ENCODE measurements at regions of chr7 and their contacts with region 1.

Region 1: DNA sequence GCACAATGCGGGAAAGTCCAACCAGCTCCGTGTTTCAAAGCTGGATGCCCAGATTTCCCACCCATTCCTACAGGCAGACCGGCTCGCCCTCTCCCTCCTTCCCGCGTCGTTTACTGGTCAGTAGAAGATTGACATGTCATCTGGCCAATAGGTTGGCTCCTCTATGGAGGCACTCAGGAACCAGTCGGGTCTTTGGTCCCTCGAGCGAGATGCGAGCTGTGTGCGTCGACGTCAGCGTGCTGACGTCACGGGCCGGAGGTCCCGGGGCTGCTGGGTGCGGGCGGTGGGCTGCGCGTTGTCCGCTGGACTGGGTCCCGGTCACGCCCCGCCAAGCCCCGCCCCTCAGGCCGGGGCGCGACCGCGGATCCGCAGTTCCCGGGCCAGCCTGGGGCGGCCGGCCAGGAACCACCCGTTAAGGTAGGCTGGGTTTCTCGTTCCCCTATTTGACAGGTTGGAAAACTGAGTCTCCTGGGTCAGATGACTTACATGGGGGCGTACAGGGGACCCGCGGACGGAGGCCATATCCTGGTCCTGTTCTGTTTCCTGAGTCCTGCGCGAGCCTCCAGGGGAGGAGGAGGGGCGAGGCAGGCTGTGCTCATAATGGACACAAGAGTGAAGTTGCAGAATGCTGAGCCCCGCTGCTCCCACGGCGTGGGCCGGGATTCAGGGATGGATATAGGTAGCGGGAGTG is at the start of gene STARD3NL:
- DNase-seq: peak; percentile 68 to 97 (median 88)
- ATAC-seq: peak; percentile 97
- H3K4me3 ChIP-seq: peak within 1 kb of the TSS; percentile 96
- H3K4me3 Mint-ChIP-seq: peak within 1 kb of the TSS; percentile 94 to 100 (median 99)
- H3K27ac ChIP-seq: peak within 1 kb of the TSS; percentile 84
- H3K27ac Mint-ChIP-seq: peak within 1 kb of the TSS; percentile 66 to 98 (median 97)
- H3K4me1 ChIP-seq: peaks cover 17 to 23% of the 10 kb centered on the region in 2 donors
- H3K4me1 Mint-ChIP-seq: peaks cover 21 to 50% (median 45%) of the 10 kb centered on the region in 7 donors
- H3K27me3 ChIP-seq: no peaks in the 10 kb centered on the region
- H3K27me3 Mint-ChIP-seq: peaks cover 3 to 14% (median 10%) of the 10 kb centered on the region in 5 donors
- total RNA-seq, gene STARD3NL: 9.4 to 22.0 (median 12.2) TPM

Region 2: DNA sequence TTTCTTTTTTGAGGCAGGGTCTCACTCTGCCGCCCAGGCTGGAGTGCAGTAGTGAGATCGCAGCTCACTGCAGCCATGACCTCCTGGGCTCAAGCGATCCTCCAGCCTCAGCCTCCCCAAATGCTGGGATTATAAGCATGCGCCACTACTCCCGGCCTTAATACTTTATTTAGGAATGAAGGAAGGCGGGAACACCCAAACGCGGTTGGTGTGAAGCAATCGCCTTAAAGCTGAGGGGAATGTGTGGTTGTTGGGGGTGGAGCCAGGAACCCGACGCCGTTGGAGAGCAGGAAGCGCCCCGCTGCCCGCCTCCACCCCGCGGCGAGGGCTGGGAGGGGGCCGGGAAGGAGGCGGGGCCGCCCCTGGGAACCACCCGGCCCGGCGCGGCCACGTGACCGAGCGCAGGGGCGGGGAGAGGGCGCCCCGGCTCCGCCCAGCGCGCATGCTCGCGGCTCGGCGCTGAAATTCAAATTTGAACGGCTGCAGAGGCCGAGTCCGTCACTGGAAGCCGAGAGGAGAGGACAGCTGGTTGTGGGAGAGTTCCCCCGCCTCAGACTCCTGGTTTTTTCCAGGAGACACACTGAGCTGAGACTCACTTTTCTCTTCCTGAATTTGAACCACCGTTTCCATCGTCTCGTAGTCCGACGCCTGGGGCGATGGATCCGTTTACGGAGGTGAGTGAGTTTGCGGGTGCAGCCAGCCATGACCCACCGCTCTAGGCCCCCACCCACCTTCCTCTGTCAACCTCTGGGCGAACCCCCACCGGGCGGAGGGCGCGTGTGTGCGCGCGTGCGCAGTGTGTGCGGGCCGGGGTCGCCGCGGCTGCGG is 1788.6 kb before region 1 on chr7 and contains the start of gene ANLN:
- CTCF ChIA-PET with region 1: no interaction called
- POLR2A ChIA-PET with region 1: no interaction called
- intact Hi-C with region 1: loop called in 1 of 2 experiments (anchors 2 kb)
- DNase-seq: peak; percentile 71 to 91 (median 82)
- ATAC-seq: peak; percentile 98
- H3K4me3 ChIP-seq: peak within 1 kb of the TSS; percentile 78
- H3K4me3 Mint-ChIP-seq: peak within 1 kb of the TSS; percentile 77 to 90 (median 85)
- H3K27ac ChIP-seq: peak within 1 kb of the TSS; percentile 67
- H3K27ac Mint-ChIP-seq: peak within 1 kb of the TSS; percentile 72 to 90 (median 81)
- H3K4me1 ChIP-seq: peaks cover 8 to 19% of the 10 kb centered on the region in 2 donors
- H3K4me1 Mint-ChIP-seq: peaks cover 12 to 39% (median 26%) of the 10 kb centered on the region in 7 donors
- H3K27me3 ChIP-seq: no peaks in the 10 kb centered on the region
- H3K27me3 Mint-ChIP-seq: peaks cover 0 to 12% (median 0%) of the 10 kb centered on the region in 5 donors
- total RNA-seq, gene ANLN: 0.35 to 48.6 (median 0.82) TPM

Region 3: GRCh38 chr7:37770838-37771237 is 407.3 kb before region 1 on chr7:
- CTCF ChIA-PET with region 1: no interaction called
- POLR2A ChIA-PET with region 1: no interaction called
- intact Hi-C with region 1: no loop called
- DNase-seq: no peak
- ATAC-seq: no peak
- H3K4me3 ChIP-seq: no peak overlapping the region
- H3K4me3 Mint-ChIP-seq: no peak overlapping the region
- H3K27ac ChIP-seq: no peak overlapping the region
- H3K27ac Mint-ChIP-seq: no peak overlapping the region
- H3K4me1 ChIP-seq: no peaks in the 10 kb centered on the region
- H3K4me1 Mint-ChIP-seq: peaks cover 0 to 8% (median 0%) of the 10 kb centered on the region in 7 donors
- H3K27me3 ChIP-seq: no peaks in the 10 kb centered on the region
- H3K27me3 Mint-ChIP-seq: peaks cover 0 to 19% (median 7%) of the 10 kb centered on the region in 5 donors

Region 4: DNA sequence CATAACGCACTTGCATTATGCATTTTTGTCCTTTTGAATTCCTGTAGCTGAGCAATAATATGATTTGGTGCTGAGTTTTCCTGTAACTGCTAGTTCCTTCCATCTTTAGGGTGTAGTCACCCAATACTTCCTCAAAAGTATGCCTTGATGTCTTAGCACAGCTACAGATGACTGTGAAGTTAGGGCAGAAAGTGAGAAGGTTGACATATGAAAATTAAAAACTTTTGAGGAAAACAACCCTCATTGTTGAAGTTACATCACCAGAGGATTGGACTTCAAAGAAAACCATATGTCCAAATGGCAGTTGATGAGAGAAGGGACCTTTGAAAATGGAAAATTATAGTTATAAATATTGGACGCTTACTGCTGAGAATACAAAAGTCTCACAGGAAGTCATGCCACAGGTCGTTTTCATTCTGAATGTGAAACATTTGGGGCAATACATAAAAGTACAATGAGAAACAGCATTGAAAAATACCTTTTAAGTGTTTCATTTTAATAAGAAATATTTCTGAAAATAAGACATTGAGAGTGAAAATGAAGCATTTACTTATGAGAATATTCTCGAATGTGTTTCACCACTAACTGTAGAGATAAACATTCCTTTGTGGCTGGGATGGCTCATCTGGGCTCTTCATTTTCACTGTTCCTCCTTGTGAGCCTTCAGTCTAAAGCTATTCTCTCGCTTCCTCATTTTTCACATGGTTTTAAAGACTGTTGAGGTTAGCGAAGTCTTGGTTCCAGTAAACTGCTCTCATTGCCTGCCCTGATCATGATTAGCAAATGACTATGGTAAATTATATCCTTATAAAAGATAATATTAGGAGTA is 391.2 kb before region 1 on chr7:
- CTCF ChIA-PET with region 1: no interaction called
- POLR2A ChIA-PET with region 1: no interaction called
- intact Hi-C with region 1: no loop called
- DNase-seq: peak in 5 of 9 donors; percentile 4 to 48 (median 19)
- ATAC-seq: peak; percentile 76
- H3K4me3 ChIP-seq: no peak overlapping the region
- H3K4me3 Mint-ChIP-seq: peak overlapping the region in 2 of 10 donors; percentile 1 to 34
- H3K27ac ChIP-seq: no peak overlapping the region
- H3K27ac Mint-ChIP-seq: peak overlapping the region in 4 of 9 donors; percentile 21 to 78 (median 40)
- H3K4me1 ChIP-seq: no peaks in the 10 kb centered on the region
- H3K4me1 Mint-ChIP-seq: peaks cover 0 to 9% (median 5%) of the 10 kb centered on the region in 7 donors
- H3K27me3 ChIP-seq: no peaks in the 10 kb centered on the region
- H3K27me3 Mint-ChIP-seq: peaks cover 6 to 16% (median 7%) of the 10 kb centered on the region in 5 donors

Region 5: DNA sequence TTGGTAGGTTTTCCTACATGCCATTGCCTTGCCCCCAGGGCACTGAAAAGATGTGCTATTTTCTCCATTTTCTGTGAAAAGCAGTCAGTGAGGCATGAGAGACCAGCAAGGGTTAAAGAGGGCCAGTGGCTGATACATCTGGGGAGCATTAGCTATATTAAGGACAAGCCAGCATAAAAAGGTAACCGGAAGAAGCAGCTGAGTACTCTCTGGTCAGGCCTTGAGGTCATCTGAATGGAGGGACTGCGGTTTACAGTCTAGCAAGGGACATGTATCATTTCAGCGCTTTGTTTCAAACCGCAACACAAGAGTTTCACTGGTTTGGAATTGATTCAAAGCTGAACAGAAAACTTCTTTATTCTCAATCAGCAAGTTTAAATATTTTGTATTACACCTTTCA is 137.3 kb before region 1 on chr7:
- CTCF ChIA-PET with region 1: no interaction called
- POLR2A ChIA-PET with region 1: no interaction called
- intact Hi-C with region 1: no loop called
- DNase-seq: no peak
- ATAC-seq: no peak
- H3K4me3 ChIP-seq: no peak overlapping the region
- H3K4me3 Mint-ChIP-seq: no peak overlapping the region
- H3K27ac ChIP-seq: no peak overlapping the region
- H3K27ac Mint-ChIP-seq: no peak overlapping the region
- H3K4me1 ChIP-seq: no peaks in the 10 kb centered on the region
- H3K4me1 Mint-ChIP-seq: no peaks in the 10 kb centered on the region
- H3K27me3 ChIP-seq: no peaks in the 10 kb centered on the region
- H3K27me3 Mint-ChIP-seq: peaks cover 0 to 17% (median 8%) of the 10 kb centered on the region in 5 donors

Region 6: DNA sequence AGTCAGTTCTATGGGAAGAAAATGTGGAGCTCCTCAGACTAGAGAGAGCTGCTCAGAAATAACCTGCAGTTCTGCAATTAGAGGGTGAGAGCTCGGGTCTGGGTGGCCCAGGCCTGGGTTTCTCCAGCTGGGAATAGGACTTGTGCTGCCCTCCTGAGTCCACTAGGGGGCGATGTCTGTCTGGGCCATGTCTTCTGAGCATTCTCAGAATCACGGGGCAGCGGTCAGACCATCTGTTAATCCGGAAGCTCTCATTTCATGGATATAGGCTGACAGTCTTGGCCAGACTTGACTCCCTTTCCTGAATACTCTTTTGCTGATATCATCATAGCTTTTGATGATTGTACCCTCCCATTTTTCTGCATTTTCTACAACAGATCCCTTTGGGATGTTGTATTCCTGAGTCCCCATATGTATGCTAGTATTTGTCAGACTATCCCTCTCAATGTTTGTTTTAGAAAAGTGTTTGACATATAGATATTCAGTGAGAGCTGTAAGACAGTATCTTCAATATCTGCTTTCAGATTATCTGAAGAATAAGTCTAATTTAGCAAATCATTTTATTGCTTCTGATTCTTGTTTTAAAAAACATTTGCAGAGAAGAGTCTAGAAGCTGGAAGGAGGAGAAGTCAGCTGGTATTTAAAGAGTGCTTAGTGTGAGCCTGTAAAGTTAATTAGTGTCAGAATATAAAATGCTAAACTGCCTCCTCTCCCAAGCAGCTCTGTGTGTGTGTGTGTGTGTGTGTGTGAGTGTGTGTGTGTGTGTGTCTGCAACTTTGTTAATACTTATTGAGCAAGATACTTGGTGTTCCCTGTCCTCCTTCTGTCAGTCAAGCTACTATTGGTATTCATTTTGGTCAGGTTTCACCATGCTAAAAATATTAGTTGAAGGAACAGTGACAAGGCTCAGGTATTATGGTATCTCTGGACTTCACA is 37.9 kb after region 1 on chr7:
- CTCF ChIA-PET with region 1: interaction called, 16 read pairs
- POLR2A ChIA-PET with region 1: interaction called, 4 read pairs
- intact Hi-C with region 1: loop called (anchors 1 kb)
- DNase-seq: peak; percentile 50 to 73 (median 65)
- ATAC-seq: peak; percentile 95
- H3K4me3 ChIP-seq: no peak overlapping the region
- H3K4me3 Mint-ChIP-seq: peak overlapping the region in 5 of 10 donors; percentile 1 to 45 (median 27)
- H3K27ac ChIP-seq: peak overlapping the region; percentile 27
- H3K27ac Mint-ChIP-seq: peak overlapping the region in 7 of 9 donors; percentile 5 to 72 (median 47)
- H3K4me1 ChIP-seq: peaks cover 8 to 57% of the 10 kb centered on the region in 2 donors
- H3K4me1 Mint-ChIP-seq: peaks cover 7 to 34% (median 10%) of the 10 kb centered on the region in 7 donors
- H3K27me3 ChIP-seq: no peaks in the 10 kb centered on the region
- H3K27me3 Mint-ChIP-seq: no peaks in the 10 kb centered on the region

Region 7: GRCh38 chr7:38318803-38319416 is 140.8 kb after region 1 on chr7:
- CTCF ChIA-PET with region 1: no interaction called
- POLR2A ChIA-PET with region 1: no interaction called
- intact Hi-C with region 1: no loop called
- DNase-seq: no peak
- ATAC-seq: peak; percentile 58
- H3K4me3 ChIP-seq: no peak overlapping the region
- H3K4me3 Mint-ChIP-seq: peak overlapping the region in 8 of 10 donors; percentile 2 to 77 (median 46)
- H3K27ac ChIP-seq: no peak overlapping the region
- H3K27ac Mint-ChIP-seq: peak overlapping the region; percentile 34 to 92 (median 81)
- H3K4me1 ChIP-seq: peaks cover 23 to 24% of the 10 kb centered on the region in 2 donors
- H3K4me1 Mint-ChIP-seq: peaks cover 5 to 50% (median 32%) of the 10 kb centered on the region in 7 donors
- H3K27me3 ChIP-seq: no peaks in the 10 kb centered on the region
- H3K27me3 Mint-ChIP-seq: no peaks in the 10 kb centered on the region

Region 8: DNA sequence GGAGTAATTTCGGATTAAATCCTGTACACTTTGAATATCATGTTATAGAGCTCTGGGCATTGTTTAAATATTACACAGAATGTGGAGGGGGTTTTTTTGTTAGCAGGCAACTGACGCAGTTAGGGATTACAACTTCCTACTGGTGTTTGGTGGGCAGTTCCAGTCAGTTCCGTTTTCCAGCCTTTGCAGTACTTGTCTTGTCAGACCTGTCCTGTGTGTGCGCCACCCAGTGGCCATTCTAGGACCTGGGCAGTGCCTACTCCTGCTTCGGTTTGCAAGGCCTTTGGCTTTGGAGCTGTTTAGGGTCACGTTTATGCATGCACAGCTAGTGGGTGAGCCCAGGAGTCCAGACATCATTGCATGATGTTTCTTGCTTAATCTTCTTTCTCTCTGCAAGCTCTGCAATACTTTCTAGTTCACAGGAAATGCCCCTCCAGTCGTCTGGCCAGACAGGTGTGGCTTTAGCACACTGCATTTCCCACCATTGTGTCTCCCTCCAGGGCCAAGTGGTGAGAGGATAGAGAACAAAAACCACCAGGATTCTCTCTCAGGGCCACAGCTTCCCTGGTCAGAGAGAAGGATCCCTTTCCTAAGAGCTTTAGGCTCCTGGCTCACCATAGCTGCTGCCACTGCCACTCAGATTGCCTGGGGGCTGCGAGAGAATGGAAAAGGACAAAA is 191.8 kb after region 1 on chr7:
- CTCF ChIA-PET with region 1: interaction called, 3 read pairs
- POLR2A ChIA-PET with region 1: interaction called, 3 read pairs
- intact Hi-C with region 1: loop called (anchors 2 kb)
- DNase-seq: peak; percentile 39 to 79 (median 63)
- ATAC-seq: peak; percentile 89
- H3K4me3 ChIP-seq: no peak overlapping the region
- H3K4me3 Mint-ChIP-seq: peak overlapping the region; percentile 9 to 64 (median 56)
- H3K27ac ChIP-seq: peak overlapping the region; percentile 64
- H3K27ac Mint-ChIP-seq: peak overlapping the region in 8 of 9 donors; percentile 85 to 97 (median 92)
- H3K4me1 ChIP-seq: peaks cover 47% of the 10 kb centered on the region in 2 donors
- H3K4me1 Mint-ChIP-seq: peaks cover 33 to 79% (median 69%) of the 10 kb centered on the region in 7 donors
- H3K27me3 ChIP-seq: no peaks in the 10 kb centered on the region
- H3K27me3 Mint-ChIP-seq: no peaks in the 10 kb centered on the region

Region 9: GRCh38 chr7:38908759-38909335 is 730.7 kb after region 1 on chr7 and contains the start of gene VPS41:
- CTCF ChIA-PET with region 1: no interaction called
- POLR2A ChIA-PET with region 1: no interaction called
- intact Hi-C with region 1: loop called in 1 of 2 experiments (anchors 1 kb)
- DNase-seq: peak; percentile 42 to 89 (median 85)
- ATAC-seq: peak; percentile 99
- H3K4me3 ChIP-seq: peak within 1 kb of the TSS; percentile 79
- H3K4me3 Mint-ChIP-seq: peak within 1 kb of the TSS; percentile 92 to 99 (median 97)
- H3K27ac ChIP-seq: peak within 1 kb of the TSS; percentile 72
- H3K27ac Mint-ChIP-seq: peak within 1 kb of the TSS; percentile 82 to 97 (median 91)
- H3K4me1 ChIP-seq: peaks cover 3 to 7% of the 10 kb centered on the region in 2 donors
- H3K4me1 Mint-ChIP-seq: peaks cover 17 to 41% (median 37%) of the 10 kb centered on the region in 7 donors
- H3K27me3 ChIP-seq: no peaks in the 10 kb centered on the region
- H3K27me3 Mint-ChIP-seq: peaks cover 0 to 5% (median 0%) of the 10 kb centered on the region in 5 donors
- total RNA-seq, gene VPS41: 37.1 to 65.0 (median 64.5) TPM

Measured in naive thymus-derived CD4-positive, alpha-beta T cell (primary cell).